CD14-positive monocyte (primary cell): ENCODE measurements at regions of chr12 and their contacts with region 1.

Region 1: GRCh38 chr12:109804820-109805761 is 28.1 kb downstream of the TRPV4 start:
- DNase-seq: peak; percentile 64 to 82 (median 74)
- H3K4me3 ChIP-seq: no peak overlapping the region
- H3K4me3 Mint-ChIP-seq: peak overlapping the region in 1 of 2 donors; percentile 35
- H3K27ac ChIP-seq: no peak overlapping the region
- H3K27ac Mint-ChIP-seq: peak overlapping the region in 5 of 7 donors; percentile 15 to 85 (median 75)
- H3K4me1 ChIP-seq: peaks cover 6 to 7% of the 10 kb centered on the region in 2 donors
- H3K4me1 Mint-ChIP-seq: peaks cover 7% of the 10 kb centered on the region
- H3K27me3 ChIP-seq: no peaks in the 10 kb centered on the region
- H3K27me3 Mint-ChIP-seq: peaks cover 0 to 3% (median 3%) of the 10 kb centered on the region in 3 donors
- CTCF ChIP-seq: peak; percentile 99

Region 2: GRCh38 chr12:109713187-109713984 is 91.7 kb before region 1 on chr12 and contains the start of gene FAM222A:
- intact Hi-C with region 1: no loop called
- DNase-seq: peak; percentile 90 to 96 (median 95)
- H3K4me3 ChIP-seq: peak within 1 kb of the TSS; percentile 42 to 80 (median 57)
- H3K4me3 Mint-ChIP-seq: peak within 1 kb of the TSS; percentile 73 to 85
- H3K27ac ChIP-seq: no peak within 1 kb of the TSS
- H3K27ac Mint-ChIP-seq: peak within 1 kb of the TSS in 1 of 7 donors; percentile 6
- H3K4me1 ChIP-seq: peaks cover 8 to 13% of the 10 kb centered on the region in 2 donors
- H3K4me1 Mint-ChIP-seq: peaks cover 5% of the 10 kb centered on the region
- H3K27me3 ChIP-seq: peaks cover 14 to 64% of the 10 kb centered on the region in 2 donors
- H3K27me3 Mint-ChIP-seq: peaks cover 54 to 75% (median 71%) of the 10 kb centered on the region in 3 donors
- CTCF ChIP-seq: no peak
- polyA plus RNA-seq, gene FAM222A: 0.09 TPM in 1 of 3 donors, not detected in the others

Region 3: GRCh38 chr12:109736552-109737108 is 68.5 kb before region 1 on chr12:
- intact Hi-C with region 1: no loop called
- DNase-seq: peak in 1 of 3 donors; percentile 4
- H3K4me3 ChIP-seq: no peak overlapping the region
- H3K4me3 Mint-ChIP-seq: no peak overlapping the region
- H3K27ac ChIP-seq: no peak overlapping the region
- H3K27ac Mint-ChIP-seq: no peak overlapping the region
- H3K4me1 ChIP-seq: no peaks in the 10 kb centered on the region
- H3K4me1 Mint-ChIP-seq: no peaks in the 10 kb centered on the region
- H3K27me3 ChIP-seq: peaks cover 0 to 27% of the 10 kb centered on the region in 2 donors
- H3K27me3 Mint-ChIP-seq: peaks cover 29 to 39% (median 32%) of the 10 kb centered on the region in 3 donors
- CTCF ChIP-seq: no peak

Region 4: GRCh38 chr12:109880016-109880931 is 75.2 kb after region 1 on chr12 and contains the start of gene GLTP:
- intact Hi-C with region 1: loop called (anchors 2 to 10 kb)
- DNase-seq: peak; percentile 78 to 90 (median 85)
- H3K4me3 ChIP-seq: peak within 1 kb of the TSS; percentile 96 to 98 (median 97)
- H3K4me3 Mint-ChIP-seq: peak within 1 kb of the TSS; percentile 94 to 97
- H3K27ac ChIP-seq: peak within 1 kb of the TSS; percentile 72 to 92
- H3K27ac Mint-ChIP-seq: peak within 1 kb of the TSS; percentile 87 to 98 (median 93)
- H3K4me1 ChIP-seq: peaks cover 48 to 64% of the 10 kb centered on the region in 2 donors
- H3K4me1 Mint-ChIP-seq: peaks cover 73% of the 10 kb centered on the region
- H3K27me3 ChIP-seq: no peaks in the 10 kb centered on the region
- H3K27me3 Mint-ChIP-seq: peaks cover 0 to 4% (median 2%) of the 10 kb centered on the region in 3 donors
- CTCF ChIP-seq: peak; percentile 68
- polyA plus RNA-seq, gene GLTP: 46.2 to 65.9 (median 51.7) TPM